GM12878 (cell line): ENCODE measurements at regions of chr16 and their contacts with region 1.

Region 1: GRCh38 chr16:57413301-57413730 is 8.7 kb downstream of the CCL17 start:
- DNase-seq: peak; percentile 52
- ATAC-seq: peak; percentile 72
- H3K4me3 ChIP-seq: no peak overlapping the region
- H3K27ac ChIP-seq: peak overlapping the region; percentile 42; the same call in 1 of the 2 replicates
- H3K4me1 ChIP-seq: peaks cover 51% of the 10 kb centered on the region
- H3K27me3 ChIP-seq: no peaks in the 10 kb centered on the region
- CTCF ChIP-seq: no peak
- EP300 ChIP-seq: no peak
- POLR2A ChIP-seq: no peak
- RAD21 ChIP-seq: no peak

Region 2: DNA sequence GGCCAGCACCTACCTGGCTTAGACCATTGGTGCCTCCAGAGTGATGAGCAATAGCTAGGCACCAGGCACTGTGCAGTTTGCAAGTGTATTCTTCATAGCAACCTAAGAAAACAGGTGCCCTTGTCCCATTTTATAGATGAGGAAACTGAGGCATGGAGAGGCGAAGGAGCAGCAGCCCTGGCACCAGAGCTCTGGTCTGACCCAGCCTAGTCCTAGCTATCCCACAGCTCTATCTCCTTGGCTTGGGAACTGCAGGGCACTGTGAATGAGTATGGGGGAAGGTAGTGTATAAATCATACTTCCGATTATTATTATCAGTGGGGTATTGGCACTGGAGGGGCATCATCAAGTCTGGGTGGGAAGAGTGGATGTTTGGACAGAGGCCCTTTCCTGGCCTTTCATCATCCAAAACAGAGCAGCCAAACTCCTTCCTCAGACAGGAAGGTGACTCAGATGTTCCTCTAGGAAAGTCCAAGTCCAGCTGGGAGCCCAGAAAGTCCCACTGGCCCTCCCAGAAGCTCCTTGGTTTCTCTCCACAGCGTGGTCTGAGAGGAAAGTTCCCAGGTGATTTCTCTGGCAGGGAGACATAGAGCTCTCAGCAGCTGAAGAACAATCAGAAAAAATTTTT is 96.8 kb before region 1 on chr16:
- CTCF ChIA-PET with region 1: interaction called, 11 read pairs
- POLR2A ChIA-PET with region 1: interaction called, 3 read pairs
- RAD21 ChIA-PET with region 1: interaction called, 6 read pairs
- SMC1A ChIA-PET with region 1: interaction called, 4 read pairs
- in situ Hi-C with region 1: no loop called
- intact Hi-C with region 1: no loop called
- DNase-seq: no peak
- ATAC-seq: no peak
- H3K4me3 ChIP-seq: no peak overlapping the region
- H3K27ac ChIP-seq: no peak overlapping the region
- H3K4me1 ChIP-seq: peaks cover 16% of the 10 kb centered on the region
- H3K27me3 ChIP-seq: no peaks in the 10 kb centered on the region
- CTCF ChIP-seq: no peak
- EP300 ChIP-seq: no peak
- POLR2A ChIP-seq: no peak
- RAD21 ChIP-seq: no peak

Region 3: GRCh38 chr16:57358527-57359095 is 54.7 kb before region 1 on chr16 and contains the start of gene CCL22:
- CTCF ChIA-PET with region 1: interaction called, 15 read pairs
- POLR2A ChIA-PET with region 1: interaction called, 5 read pairs
- RAD21 ChIA-PET with region 1: interaction called, 15 read pairs
- SMC1A ChIA-PET with region 1: interaction called, 9 read pairs
- in situ Hi-C with region 1: no loop called
- intact Hi-C with region 1: no loop called
- DNase-seq: peak; percentile 45
- ATAC-seq: peak; percentile 71
- H3K4me3 ChIP-seq: peak within 1 kb of the TSS; percentile 37; the same call in 1 of the 2 replicates
- H3K27ac ChIP-seq: peak within 1 kb of the TSS; percentile 30
- H3K4me1 ChIP-seq: peaks cover 23% of the 10 kb centered on the region
- H3K27me3 ChIP-seq: no peaks in the 10 kb centered on the region
- CTCF ChIP-seq: no peak
- EP300 ChIP-seq: no peak; a peak in 1 of 4 replicates
- POLR2A ChIP-seq: peak; percentile 89
- RAD21 ChIP-seq: no peak
- polyA plus RNA-seq, gene CCL22: 581 to 591 TPM

Region 4: DNA sequence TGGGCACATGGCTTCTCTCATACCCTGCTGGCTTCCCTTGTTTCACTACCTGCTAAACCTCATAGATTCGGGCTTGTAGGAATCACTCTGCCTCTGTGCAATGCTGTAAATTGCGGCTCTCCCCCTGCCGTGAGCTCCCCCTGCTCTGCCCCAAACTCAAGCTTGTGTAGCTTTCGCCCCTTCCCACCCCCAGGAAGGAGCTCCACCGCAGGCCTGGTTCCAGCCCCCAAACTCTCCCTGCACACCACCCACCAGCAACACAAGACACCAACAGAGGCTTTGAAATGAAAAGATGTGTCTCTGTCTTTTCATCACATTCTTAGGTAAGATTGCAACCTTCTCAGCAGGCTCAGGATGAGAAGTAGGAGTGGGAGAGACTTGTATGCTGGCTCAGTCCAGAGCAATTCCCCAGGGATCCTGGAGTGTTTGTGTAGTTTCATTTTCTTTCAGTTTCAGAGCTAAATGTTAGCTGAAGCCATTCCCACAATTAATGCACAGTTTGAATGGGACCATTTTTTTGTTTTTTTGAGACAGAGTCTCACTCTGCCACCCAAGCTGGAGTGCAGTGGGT is 26.9 kb before region 1 on chr16:
- CTCF ChIA-PET with region 1: interaction called, 19 read pairs
- POLR2A ChIA-PET with region 1: interaction called, 13 read pairs
- RAD21 ChIA-PET with region 1: interaction called, 15 read pairs
- SMC1A ChIA-PET with region 1: interaction called, 20 read pairs
- in situ Hi-C with region 1: no loop called
- intact Hi-C with region 1: loop called (anchors 2 kb)
- DNase-seq: no peak
- ATAC-seq: no peak
- H3K4me3 ChIP-seq: no peak overlapping the region
- H3K27ac ChIP-seq: no peak overlapping the region
- H3K4me1 ChIP-seq: peaks cover 51% of the 10 kb centered on the region
- H3K27me3 ChIP-seq: no peaks in the 10 kb centered on the region
- CTCF ChIP-seq: no peak
- EP300 ChIP-seq: no peak
- POLR2A ChIP-seq: no peak
- RAD21 ChIP-seq: no peak

Region 5: GRCh38 chr16:57485916-57486857 is 72.9 kb after region 1 on chr16 and contains the start of gene DOK4:
- CTCF ChIA-PET with region 1: interaction called, 20 read pairs
- POLR2A ChIA-PET with region 1: no interaction called
- RAD21 ChIA-PET with region 1: interaction called, 6 read pairs
- SMC1A ChIA-PET with region 1: no interaction called
- in situ Hi-C with region 1: no loop called
- intact Hi-C with region 1: no loop called
- DNase-seq: no peak
- ATAC-seq: peak; percentile 93
- H3K4me3 ChIP-seq: peak within 1 kb of the TSS; percentile 60; the same call in 1 of the 2 replicates
- H3K27ac ChIP-seq: no peak within 1 kb of the TSS
- H3K4me1 ChIP-seq: peaks cover 15% of the 10 kb centered on the region
- H3K27me3 ChIP-seq: peaks cover 0 to 2% of the 10 kb centered on the region in 2 experiments; a peak in 1 of 4 replicates
- CTCF ChIP-seq: no peak
- EP300 ChIP-seq: no peak
- POLR2A ChIP-seq: no peak
- RAD21 ChIP-seq: no peak
- polyA plus RNA-seq, gene DOK4: 0.20 TPM in 1 of 2 experiments, not detected in the other